Naive thymus-derived CD4-positive, alpha-beta T cell (primary cell): ENCODE measurements at regions of chr13 and their contacts with region 1.

Region 1: DNA sequence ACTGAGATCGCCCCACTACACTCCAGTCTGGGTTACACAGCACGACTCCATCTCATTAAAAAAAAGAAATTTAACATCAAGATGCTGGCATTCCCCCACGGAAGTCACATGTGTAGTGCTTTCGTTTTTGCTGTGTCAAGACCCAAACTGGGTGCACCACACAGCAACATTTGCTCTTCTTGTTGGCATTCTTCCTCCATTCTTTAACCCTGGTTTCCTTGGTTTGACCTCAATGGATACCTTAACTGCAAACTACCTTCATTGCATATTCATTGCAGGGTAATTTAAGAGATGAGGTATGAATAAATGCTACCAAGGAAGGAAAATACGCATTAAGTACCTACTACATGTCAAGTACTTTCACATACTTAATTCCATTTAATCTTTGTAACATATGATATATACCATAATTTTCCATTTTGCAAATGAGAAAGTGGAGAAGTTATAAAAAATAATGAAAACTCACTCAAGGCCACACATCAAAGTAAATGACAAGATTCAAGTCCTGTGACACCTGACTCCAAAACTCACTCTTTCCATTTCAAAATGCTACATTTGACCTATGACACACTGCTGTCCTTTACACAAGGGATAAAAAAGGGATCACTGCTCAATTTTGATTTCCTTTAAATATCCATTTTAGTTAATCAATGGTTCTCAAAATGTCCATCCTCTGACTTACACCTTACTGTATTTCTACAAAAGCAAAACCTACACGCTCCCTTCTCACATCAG is 59.2 kb downstream of the STK24 start:
- DNase-seq: peak in 2 of 9 donors; percentile 19 to 31
- ATAC-seq: peak; percentile 78
- H3K4me3 ChIP-seq: no peak overlapping the region
- H3K4me3 Mint-ChIP-seq: peak overlapping the region in 5 of 10 donors; percentile 14 to 51 (median 24)
- H3K27ac ChIP-seq: no peak overlapping the region
- H3K27ac Mint-ChIP-seq: peak overlapping the region in 7 of 9 donors; percentile 33 to 88 (median 50)
- H3K4me1 ChIP-seq: peaks cover 25 to 32% of the 10 kb centered on the region in 2 donors
- H3K4me1 Mint-ChIP-seq: peaks cover 46 to 97% (median 91%) of the 10 kb centered on the region in 7 donors
- H3K27me3 ChIP-seq: no peaks in the 10 kb centered on the region
- H3K27me3 Mint-ChIP-seq: no peaks in the 10 kb centered on the region

Region 2: GRCh38 chr13:98533912-98534311 is 16.2 kb after region 1 on chr13:
- CTCF ChIA-PET with region 1: no interaction called
- POLR2A ChIA-PET with region 1: interaction called, 3 read pairs
- intact Hi-C with region 1: loop called in 1 of 2 experiments (anchors 2 kb)
- DNase-seq: no peak
- ATAC-seq: no peak
- H3K4me3 ChIP-seq: no peak overlapping the region
- H3K4me3 Mint-ChIP-seq: peak overlapping the region in 6 of 10 donors; percentile 20 to 65 (median 50)
- H3K27ac ChIP-seq: no peak overlapping the region
- H3K27ac Mint-ChIP-seq: peak overlapping the region; percentile 17 to 73 (median 43)
- H3K4me1 ChIP-seq: peaks cover 53 to 63% of the 10 kb centered on the region in 2 donors
- H3K4me1 Mint-ChIP-seq: peaks cover 71 to 96% (median 94%) of the 10 kb centered on the region in 7 donors
- H3K27me3 ChIP-seq: no peaks in the 10 kb centered on the region
- H3K27me3 Mint-ChIP-seq: no peaks in the 10 kb centered on the region

Region 3: GRCh38 chr13:98542568-98543377 is 25.0 kb after region 1 on chr13:
- CTCF ChIA-PET with region 1: no interaction called
- POLR2A ChIA-PET with region 1: no interaction called
- intact Hi-C with region 1: loop called in 1 of 2 experiments (anchors 2 kb)
- DNase-seq: peak in 5 of 9 donors; percentile 31 to 39 (median 37)
- ATAC-seq: peak; percentile 65
- H3K4me3 ChIP-seq: peak overlapping the region; percentile 43
- H3K4me3 Mint-ChIP-seq: peak overlapping the region; percentile 79 to 87 (median 84)
- H3K27ac ChIP-seq: peak overlapping the region; percentile 32
- H3K27ac Mint-ChIP-seq: peak overlapping the region; percentile 61 to 91 (median 82)
- H3K4me1 ChIP-seq: peaks cover 38 to 49% of the 10 kb centered on the region in 2 donors
- H3K4me1 Mint-ChIP-seq: peaks cover 75 to 97% (median 94%) of the 10 kb centered on the region in 7 donors
- H3K27me3 ChIP-seq: no peaks in the 10 kb centered on the region
- H3K27me3 Mint-ChIP-seq: no peaks in the 10 kb centered on the region

Region 4: GRCh38 chr13:98570929-98571372 is 53.2 kb after region 1 on chr13:
- CTCF ChIA-PET with region 1: no interaction called
- POLR2A ChIA-PET with region 1: interaction called, 3 read pairs
- intact Hi-C with region 1: loop called in 1 of 2 experiments (anchors 2 kb)
- DNase-seq: peak in 6 of 9 donors; percentile 51 to 72 (median 60)
- ATAC-seq: peak; percentile 70
- H3K4me3 ChIP-seq: peak overlapping the region; percentile 63
- H3K4me3 Mint-ChIP-seq: peak overlapping the region; percentile 84 to 99 (median 90)
- H3K27ac ChIP-seq: peak overlapping the region; percentile 85
- H3K27ac Mint-ChIP-seq: peak overlapping the region; percentile 84 to 98 (median 96)
- H3K4me1 ChIP-seq: peaks cover 76 to 83% of the 10 kb centered on the region in 2 donors
- H3K4me1 Mint-ChIP-seq: peaks cover 82 to 97% (median 96%) of the 10 kb centered on the region in 7 donors
- H3K27me3 ChIP-seq: no peaks in the 10 kb centered on the region
- H3K27me3 Mint-ChIP-seq: no peaks in the 10 kb centered on the region

Region 5: DNA sequence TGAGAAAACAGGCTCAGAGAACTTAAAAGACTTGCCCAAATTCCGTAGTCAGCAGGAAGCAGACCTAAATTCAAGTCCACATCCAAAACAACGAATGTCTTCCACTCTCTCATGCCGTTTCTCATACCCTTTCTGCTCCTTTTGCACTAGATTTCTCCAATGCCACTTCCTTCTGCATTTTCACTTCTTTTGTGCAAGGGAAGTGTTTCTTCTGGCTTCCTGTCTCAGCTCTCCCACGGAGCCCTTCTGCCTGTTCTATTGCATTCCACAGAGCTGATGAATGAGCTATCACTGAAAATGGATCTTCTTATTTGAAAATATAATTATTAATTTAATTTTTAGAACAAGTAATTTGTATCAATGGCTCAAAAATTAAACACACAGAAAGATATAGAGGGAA is 115.2 kb after region 1 on chr13:
- CTCF ChIA-PET with region 1: interaction called, 12 read pairs
- POLR2A ChIA-PET with region 1: no interaction called
- intact Hi-C with region 1: no loop called
- DNase-seq: no peak
- ATAC-seq: no peak
- H3K4me3 ChIP-seq: no peak overlapping the region
- H3K4me3 Mint-ChIP-seq: no peak overlapping the region
- H3K27ac ChIP-seq: no peak overlapping the region
- H3K27ac Mint-ChIP-seq: no peak overlapping the region
- H3K4me1 ChIP-seq: no peaks in the 10 kb centered on the region
- H3K4me1 Mint-ChIP-seq: peaks cover 0 to 6% (median 4%) of the 10 kb centered on the region in 7 donors
- H3K27me3 ChIP-seq: no peaks in the 10 kb centered on the region
- H3K27me3 Mint-ChIP-seq: peaks cover 0 to 21% (median 0%) of the 10 kb centered on the region in 5 donors